ENCODE measurements at regions of chr10 and their contacts with region 1.

Region 1: DNA sequence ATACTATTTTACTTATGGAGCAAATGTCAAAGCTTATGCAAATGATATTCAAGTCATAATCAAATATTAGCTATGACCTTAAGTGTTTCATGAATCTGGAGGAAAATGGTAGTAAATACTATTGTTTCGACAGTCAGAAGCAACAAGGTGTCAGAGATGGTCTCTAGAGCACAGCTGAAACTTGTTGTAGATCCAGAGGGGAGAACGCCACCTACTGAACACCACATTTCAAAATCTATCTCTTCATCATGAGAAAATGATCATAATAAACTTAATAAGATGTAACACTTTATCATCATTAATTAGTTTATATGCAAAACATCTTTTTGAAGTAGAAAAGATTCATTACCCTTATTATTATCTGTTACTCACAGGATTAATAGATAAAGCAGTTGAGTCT is 418.7 kb downstream of the GATA3 start:
- DNase-seq: peak in 5 of 14 experiments; percentile 17 to 78 (median 68)
- ATAC-seq: peak; percentile 83
- H3K4me3 ChIP-seq: no peak overlapping the region
- H3K4me3 Mint-ChIP-seq: no peak overlapping the region
- H3K27ac ChIP-seq: no peak overlapping the region
- H3K27ac Mint-ChIP-seq: no peak overlapping the region
- H3K4me1 ChIP-seq: no peaks in the 10 kb centered on the region
- H3K4me1 Mint-ChIP-seq: no peaks in the 10 kb centered on the region
- H3K27me3 ChIP-seq: no peaks in the 10 kb centered on the region
- H3K27me3 Mint-ChIP-seq: peaks cover 28% of the 10 kb centered on the region
- CTCF ChIP-seq: peak; percentile 43

Region 2: DNA sequence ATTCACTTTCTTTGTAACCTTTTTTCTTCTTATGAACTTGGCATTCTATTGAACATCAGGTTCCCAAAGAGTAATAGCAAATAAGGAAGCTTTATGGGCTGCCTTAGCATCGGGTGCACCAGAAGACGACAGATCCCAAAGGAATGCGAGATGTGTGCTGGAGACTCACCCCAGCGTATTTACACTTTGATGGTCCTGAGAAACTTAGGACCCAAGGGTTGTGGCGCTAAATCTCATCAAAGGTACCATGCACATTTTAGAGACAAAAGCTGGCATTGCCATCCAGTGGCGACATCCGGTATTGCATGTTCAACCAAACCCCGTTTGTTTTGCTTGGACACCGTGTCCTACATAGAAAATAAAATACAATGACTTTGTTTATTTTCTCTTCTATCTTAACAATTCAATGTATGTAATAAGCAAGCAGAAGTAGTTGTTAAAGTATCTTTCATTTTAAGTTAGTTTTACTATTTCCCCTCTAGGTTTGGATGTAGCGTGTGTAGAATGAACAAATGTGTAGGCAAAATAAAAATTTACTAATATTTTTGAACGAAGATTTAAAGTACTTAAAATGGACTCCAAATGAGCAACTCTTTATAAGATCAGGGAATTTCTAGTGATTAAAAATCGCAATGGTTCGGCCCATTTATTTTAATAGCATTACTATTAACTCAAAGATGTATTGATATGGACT is 736.0 kb after region 1 on chr10:
- CTCF ChIA-PET with region 1: no interaction called
- POLR2A ChIA-PET with region 1: no interaction called
- intact Hi-C with region 1: loop called (anchors 10 kb)
- DNase-seq: peak; percentile 51 to 81 (median 69)
- ATAC-seq: peak; percentile 49
- H3K4me3 ChIP-seq: no peak overlapping the region
- H3K4me3 Mint-ChIP-seq: no peak overlapping the region
- H3K27ac ChIP-seq: no peak overlapping the region
- H3K27ac Mint-ChIP-seq: no peak overlapping the region
- H3K4me1 ChIP-seq: peaks cover 3% of the 10 kb centered on the region
- H3K4me1 Mint-ChIP-seq: peaks cover 8% of the 10 kb centered on the region
- H3K27me3 ChIP-seq: peaks cover 0 to 5% of the 10 kb centered on the region in 2 experiments
- H3K27me3 Mint-ChIP-seq: peaks cover 15% of the 10 kb centered on the region
- CTCF ChIP-seq: peak; percentile 98